PC-9 (cell line): ENCODE measurements at regions of chr5 and their contacts with region 1.

Region 1: DNA sequence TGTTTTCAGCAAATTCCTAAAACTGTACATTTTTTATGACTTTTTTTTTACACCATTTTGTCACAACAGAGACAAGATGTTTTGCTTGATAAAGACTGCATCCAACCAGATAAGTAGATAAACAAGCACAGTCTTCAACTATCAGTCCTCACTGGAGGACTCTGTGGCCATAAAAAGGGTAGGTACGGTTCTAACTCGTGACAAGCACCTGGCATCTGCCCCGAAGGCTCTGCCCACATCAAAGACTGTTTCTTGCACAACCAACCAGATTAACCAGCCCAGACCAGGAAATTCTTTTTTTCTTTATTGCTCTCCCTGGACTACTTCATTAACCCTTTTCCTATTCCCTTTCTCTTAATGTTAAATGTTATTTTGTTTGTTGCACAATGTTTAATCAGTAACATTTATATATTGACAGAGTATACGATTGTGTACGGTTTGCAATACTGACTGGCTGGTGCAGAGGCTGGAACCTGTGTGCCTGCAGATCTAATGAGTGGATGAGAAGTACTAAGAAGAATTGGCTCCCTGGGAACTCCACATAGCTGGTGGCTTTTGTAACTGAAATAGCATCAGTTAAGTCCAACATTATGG is 74.1 kb downstream of the SERINC5 start:
- DNase-seq: peak; percentile 81 to 97
- H3K4me3 ChIP-seq: peak overlapping the region; percentile 19; the same call in 1 of the 2 replicates
- H3K27ac ChIP-seq: peak overlapping the region; percentile 99
- H3K4me1 ChIP-seq: peaks cover 78% of the 10 kb centered on the region
- H3K27me3 ChIP-seq: no peaks in the 10 kb centered on the region
- CTCF ChIP-seq: no peak

Region 2: DNA sequence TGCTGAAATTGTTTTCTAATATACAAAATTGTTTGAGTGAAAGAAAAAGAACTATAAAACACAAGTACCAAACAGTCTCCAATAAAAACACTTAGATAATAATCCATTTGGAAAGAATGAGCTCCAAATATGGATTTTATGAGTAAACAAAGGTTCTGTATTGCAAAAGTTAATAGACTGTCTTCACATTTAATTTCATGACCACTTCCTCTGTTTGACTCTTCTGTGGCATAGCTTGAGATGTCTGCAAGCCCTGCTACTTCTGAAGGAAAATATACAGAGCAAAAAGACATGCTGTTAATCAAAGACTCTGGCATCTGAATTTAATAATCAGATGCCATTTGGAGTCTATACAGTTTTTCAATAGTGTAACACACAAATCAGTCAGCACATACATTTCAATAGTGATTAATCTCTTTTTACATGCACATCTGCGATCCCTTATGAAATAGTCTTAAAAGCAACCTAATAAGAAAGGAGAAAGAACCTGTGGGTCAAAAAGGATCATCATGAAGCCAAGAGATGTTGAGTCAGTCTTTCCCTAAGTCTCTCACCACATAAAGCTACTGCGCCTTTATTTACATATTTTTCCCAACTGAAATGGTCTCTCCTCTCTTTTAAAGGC is 1367.7 kb before region 1 on chr5:
- CTCF ChIA-PET with region 1: no interaction called
- POLR2A ChIA-PET with region 1: no interaction called
- intact Hi-C with region 1: no loop called
- DNase-seq: no peak
- H3K4me3 ChIP-seq: no peak overlapping the region
- H3K27ac ChIP-seq: no peak overlapping the region
- H3K4me1 ChIP-seq: 0 out of 2 replicates have a peak, but pooled peaks cover 8% of the 10 kb centered on the region
- H3K27me3 ChIP-seq: no peaks in the 10 kb centered on the region
- CTCF ChIP-seq: no peak

Region 3: DNA sequence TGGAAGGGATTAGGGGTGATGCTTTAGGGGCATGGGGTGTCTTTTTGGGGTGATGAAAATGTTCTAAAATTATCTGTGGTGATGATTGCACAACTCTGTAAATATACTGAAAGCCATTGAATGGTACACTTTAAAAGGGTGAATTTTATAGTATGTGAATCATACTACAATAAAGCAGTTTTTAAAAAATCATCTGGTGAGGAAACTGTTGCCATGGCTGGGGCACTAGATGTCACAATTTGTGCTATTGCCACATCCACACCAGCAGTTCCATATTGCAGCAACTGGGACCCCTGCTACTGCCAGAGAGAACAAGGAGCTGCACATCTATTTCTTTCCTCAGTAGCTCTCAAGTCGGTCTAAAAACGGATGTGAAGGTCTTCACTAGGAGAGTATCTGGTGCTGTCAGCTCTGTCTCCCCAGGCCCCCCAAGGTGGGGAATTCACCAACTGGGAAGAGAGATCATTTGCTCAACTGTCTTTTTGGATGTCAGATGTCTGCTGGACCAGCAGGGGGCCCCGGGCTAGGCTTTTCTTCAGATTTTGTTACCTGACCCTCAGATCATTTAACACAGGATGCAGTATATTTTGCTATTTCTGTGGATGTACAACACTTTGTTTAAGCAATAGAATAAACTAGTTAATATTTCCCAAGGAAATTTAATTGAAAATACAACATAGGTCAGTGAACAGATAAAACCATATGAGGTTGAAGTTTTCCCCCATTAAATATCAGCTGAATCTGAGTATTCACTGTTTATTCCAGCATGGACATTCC is 478.9 kb before region 1 on chr5:
- CTCF ChIA-PET with region 1: no interaction called
- POLR2A ChIA-PET with region 1: no interaction called
- intact Hi-C with region 1: no loop called
- DNase-seq: peak in 1 of 2 experiments; percentile 65
- H3K4me3 ChIP-seq: no peak overlapping the region
- H3K27ac ChIP-seq: peak overlapping the region; percentile 36
- H3K4me1 ChIP-seq: peaks cover 56% of the 10 kb centered on the region
- H3K27me3 ChIP-seq: no peaks in the 10 kb centered on the region
- CTCF ChIP-seq: peak; percentile 65

Region 4: GRCh38 chr5:80210014-80210413 is 28.3 kb after region 1 on chr5:
- CTCF ChIA-PET with region 1: interaction called, 3 read pairs
- POLR2A ChIA-PET with region 1: interaction called, 12 read pairs
- intact Hi-C with region 1: loop called (anchors 1 kb)
- DNase-seq: no peak
- H3K4me3 ChIP-seq: no peak overlapping the region
- H3K27ac ChIP-seq: no peak overlapping the region
- H3K4me1 ChIP-seq: peaks cover 28% of the 10 kb centered on the region
- H3K27me3 ChIP-seq: no peaks in the 10 kb centered on the region
- CTCF ChIP-seq: no peak

Region 5: GRCh38 chr5:80216753-80217596 is 35.3 kb after region 1 on chr5:
- CTCF ChIA-PET with region 1: no interaction called
- POLR2A ChIA-PET with region 1: no interaction called
- intact Hi-C with region 1: loop called (anchors 1 kb)
- DNase-seq: no peak
- H3K4me3 ChIP-seq: no peak overlapping the region
- H3K27ac ChIP-seq: peak overlapping the region; percentile 88
- H3K4me1 ChIP-seq: peaks cover 52% of the 10 kb centered on the region
- H3K27me3 ChIP-seq: no peaks in the 10 kb centered on the region
- CTCF ChIP-seq: no peak

Region 6: DNA sequence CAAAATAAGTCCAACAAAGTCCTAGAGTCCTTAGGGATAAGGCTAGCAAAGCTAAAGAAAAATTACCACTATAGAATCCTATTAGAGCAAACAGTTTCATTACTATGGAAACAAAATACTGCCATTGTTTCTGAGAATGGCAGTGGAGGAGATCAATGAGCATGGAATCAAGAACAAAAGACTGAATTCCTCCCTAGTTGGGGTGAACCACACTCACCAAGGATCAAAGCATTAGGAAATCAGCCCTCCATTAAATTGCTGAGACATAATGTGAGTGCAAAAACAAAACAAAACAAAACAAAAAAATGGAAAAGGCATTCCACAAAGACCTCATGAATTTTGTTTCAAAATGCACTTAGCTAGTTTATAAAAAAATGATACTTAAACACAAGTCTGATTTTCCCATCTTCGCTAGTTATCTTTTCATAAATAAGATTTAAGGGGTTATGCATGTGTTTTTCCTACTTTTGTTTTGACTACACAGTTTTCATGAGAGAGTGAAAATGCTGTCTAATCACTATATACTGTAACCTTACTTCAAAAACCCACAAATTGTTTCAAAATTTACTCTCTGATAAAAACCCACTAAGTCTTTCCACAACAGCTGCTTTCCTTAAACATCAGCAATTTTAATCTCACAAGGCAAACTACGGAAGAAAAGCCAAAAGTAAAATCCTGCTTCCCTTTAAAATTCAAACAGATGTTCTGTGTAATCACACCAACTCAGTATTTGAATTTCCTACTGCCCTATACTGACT is 64.5 kb after region 1 on chr5:
- CTCF ChIA-PET with region 1: interaction called, 3 read pairs
- POLR2A ChIA-PET with region 1: interaction called, 6 read pairs
- intact Hi-C with region 1: loop called (anchors 1 kb)
- DNase-seq: peak in 1 of 2 experiments; percentile 67
- H3K4me3 ChIP-seq: peak overlapping the region; percentile 40; the same call in 1 of the 2 replicates
- H3K27ac ChIP-seq: peak overlapping the region; percentile 98
- H3K4me1 ChIP-seq: peaks cover 52% of the 10 kb centered on the region
- H3K27me3 ChIP-seq: no peaks in the 10 kb centered on the region
- CTCF ChIP-seq: no peak

Region 7: GRCh38 chr5:80255732-80256479 is 74.2 kb after region 1 on chr5 and contains the start of gene SERINC5:
- CTCF ChIA-PET with region 1: interaction called, 3 read pairs
- POLR2A ChIA-PET with region 1: interaction called, 18 read pairs
- intact Hi-C with region 1: loop called (anchors 1 kb)
- DNase-seq: peak; percentile 53 to 79
- H3K4me3 ChIP-seq: peak within 1 kb of the TSS; percentile 76
- H3K27ac ChIP-seq: peak within 1 kb of the TSS; percentile 94
- H3K4me1 ChIP-seq: peaks cover 36% of the 10 kb centered on the region
- H3K27me3 ChIP-seq: no peaks in the 10 kb centered on the region
- CTCF ChIP-seq: no peak
- total RNA-seq, gene SERINC5: 68.8 and 77.7 TPM in 2 replicates

Region 8: DNA sequence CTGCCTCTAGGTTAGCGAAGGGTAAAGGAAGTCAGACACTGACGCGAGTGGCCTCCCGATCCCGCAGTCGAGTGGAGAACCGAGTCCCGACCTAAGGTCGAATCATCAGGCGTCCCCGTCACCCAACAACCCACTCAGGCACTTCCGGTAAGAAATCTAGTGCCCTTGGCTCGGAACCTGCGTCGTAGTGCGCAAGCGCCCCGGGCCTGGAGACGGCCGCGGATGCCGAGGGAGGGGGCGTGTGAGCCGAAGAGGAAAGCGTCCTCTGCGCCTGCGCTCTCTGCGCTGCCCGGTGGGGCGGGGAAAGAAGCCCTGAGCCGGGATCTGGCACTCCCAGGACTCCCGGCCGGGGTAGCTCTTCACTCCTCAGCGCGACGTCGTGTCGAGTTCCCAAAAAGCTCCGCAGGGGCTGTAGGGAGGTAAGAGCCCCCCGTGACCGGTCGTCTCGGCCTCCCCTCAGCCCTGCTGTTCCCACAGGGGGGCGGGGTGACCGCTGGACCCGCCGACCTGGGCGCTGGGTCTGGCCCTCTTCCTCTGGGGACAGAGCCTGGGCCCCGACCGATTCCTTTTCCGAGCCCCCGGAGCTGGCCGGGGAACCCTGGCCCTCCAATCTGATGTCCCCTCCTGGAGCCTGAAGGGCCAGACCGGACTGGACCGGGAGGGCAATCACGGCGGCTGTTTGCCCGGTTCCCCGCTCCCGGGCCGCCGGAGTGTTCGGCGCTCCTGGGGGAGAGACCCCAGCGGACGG is 226.2 kb after region 1 on chr5 and contains the start of gene ZFYVE16:
- CTCF ChIA-PET with region 1: no interaction called
- POLR2A ChIA-PET with region 1: no interaction called
- intact Hi-C with region 1: no loop called
- DNase-seq: peak; percentile 89 to 97
- H3K4me3 ChIP-seq: peak within 1 kb of the TSS; percentile 83
- H3K27ac ChIP-seq: peak within 1 kb of the TSS; percentile 83
- H3K4me1 ChIP-seq: peaks cover 18% of the 10 kb centered on the region
- H3K27me3 ChIP-seq: no peaks in the 10 kb centered on the region
- CTCF ChIP-seq: peak; percentile 47; the same call in 1 of the 2 replicates
- total RNA-seq, gene ZFYVE16: 27.7 and 34.4 TPM in 2 replicates